ENCODE measurements at regions of chr11 and their contacts with region 1.

Region 1: GRCh38 chr11:128552783-128553661 is 34.3 kb downstream of the ETS1 start:
- DNase-seq: no peak
- H3K4me3 ChIP-seq: peak overlapping the region; percentile 7
- H3K27ac ChIP-seq: peak overlapping the region; percentile 95
- H3K4me1 ChIP-seq: peaks cover 67% of the 10 kb centered on the region
- H3K27me3 ChIP-seq: no peaks in the 10 kb centered on the region
- CTCF ChIP-seq: no peak

Region 2: DNA sequence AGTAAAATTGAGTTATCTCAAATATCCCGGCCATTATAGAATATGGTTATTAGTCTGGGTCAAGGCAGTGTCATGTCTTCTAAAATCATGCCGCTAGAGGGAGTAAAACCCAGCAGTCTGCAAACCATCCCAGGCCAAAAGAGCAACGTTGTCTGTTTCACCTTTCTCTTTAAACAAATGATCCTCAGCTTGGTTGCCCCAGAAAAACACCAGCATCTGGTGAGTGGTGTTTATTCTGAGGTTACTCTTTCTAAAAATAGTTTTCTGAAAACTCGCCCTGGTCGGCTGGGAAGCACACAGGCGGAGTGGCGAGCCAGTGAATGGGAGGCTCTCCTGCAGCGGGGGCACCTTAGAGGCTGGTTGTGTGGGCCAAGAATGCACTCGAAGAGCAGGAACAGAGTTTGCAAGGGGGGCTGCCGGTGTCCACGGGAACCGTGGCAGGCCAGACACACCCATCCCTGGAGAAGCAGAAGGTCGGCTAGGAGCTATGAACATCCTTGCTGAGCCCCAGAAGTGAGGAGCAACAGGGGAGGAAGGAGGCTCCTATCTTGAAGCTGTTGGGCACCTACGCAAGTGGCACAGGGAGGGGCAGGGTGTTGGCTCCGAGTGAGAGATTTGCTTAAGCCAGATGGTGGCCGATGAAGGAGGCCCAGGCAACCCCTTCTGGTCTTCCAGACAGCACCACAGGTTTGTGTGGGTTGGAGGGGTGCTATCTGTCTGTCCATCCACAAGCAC is 262.7 kb before region 1 on chr11:
- intact Hi-C with region 1: loop called (anchors 10 kb)
- DNase-seq: peak; percentile 18
- H3K4me3 ChIP-seq: peak overlapping the region; percentile 47
- H3K27ac ChIP-seq: peak overlapping the region; percentile 69
- H3K4me1 ChIP-seq: peaks cover 41% of the 10 kb centered on the region
- H3K27me3 ChIP-seq: no peaks in the 10 kb centered on the region
- CTCF ChIP-seq: peak; percentile 91

Region 3: GRCh38 chr11:128624269-128625175 is 71.5 kb after region 1 on chr11:
- intact Hi-C with region 1: loop called (anchors 5 kb)
- DNase-seq: no peak
- H3K4me3 ChIP-seq: no peak overlapping the region
- H3K27ac ChIP-seq: no peak overlapping the region
- H3K4me1 ChIP-seq: peaks cover 27% of the 10 kb centered on the region
- H3K27me3 ChIP-seq: no peaks in the 10 kb centered on the region
- CTCF ChIP-seq: no peak